HEK293 (cell line): ENCODE measurements at regions of chr7 and their contacts with region 1.

Region 1: DNA sequence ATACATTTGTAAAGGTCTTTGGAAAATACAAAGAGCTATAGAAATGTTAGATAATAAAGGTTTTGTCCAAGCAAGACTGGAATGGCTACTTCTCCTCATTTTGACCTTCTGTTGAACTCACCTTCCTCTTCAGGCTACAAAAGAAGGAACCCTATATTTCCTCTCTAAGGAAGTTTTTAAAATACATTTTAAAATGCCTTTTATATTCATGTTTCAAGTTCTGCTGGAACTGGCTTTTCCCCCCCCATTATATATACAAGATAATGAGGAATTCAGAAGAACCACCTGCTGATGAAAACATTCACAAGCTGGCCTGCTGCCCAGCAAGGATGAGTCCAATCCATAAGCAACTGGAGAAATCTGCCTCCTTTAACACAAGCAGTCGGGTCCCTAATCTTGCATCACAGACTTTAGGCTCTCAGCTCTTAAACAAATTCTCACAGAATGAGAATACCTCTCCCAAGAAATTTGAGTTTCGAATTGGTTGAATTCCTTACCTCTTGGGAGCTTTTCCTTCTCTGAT is 44.6 kb downstream of the MTERF1 start:
- H3K4me3 ChIP-seq: no peak overlapping the region
- H3K27ac ChIP-seq: no peak overlapping the region
- H3K4me1 ChIP-seq: peaks cover 6% of the 10 kb centered on the region; the same call in 1 of the 2 replicates
- CTCF ChIP-seq: no peak

Region 2: DNA sequence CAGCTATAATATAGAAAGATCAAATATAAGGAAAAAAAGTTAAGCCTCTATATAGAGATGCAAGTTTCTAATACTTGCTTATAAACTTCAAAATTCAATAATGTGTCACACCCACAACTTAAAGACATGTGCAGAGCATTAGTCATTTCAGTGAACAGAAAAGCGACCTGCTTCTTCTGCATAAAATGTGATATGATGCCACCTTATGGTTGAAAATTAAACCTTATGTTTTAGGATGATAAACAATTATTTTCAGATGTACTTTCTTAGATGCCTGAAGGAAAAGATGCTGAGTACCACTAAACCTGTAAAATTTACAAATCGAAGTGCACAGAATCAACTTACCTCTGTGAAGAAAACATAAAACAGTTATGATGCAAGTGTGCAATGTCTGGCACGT is 51.4 kb before region 1 on chr7:
- CTCF ChIA-PET with region 1: no interaction called
- POLR2A ChIA-PET with region 1: no interaction called
- H3K4me3 ChIP-seq: no peak overlapping the region
- H3K27ac ChIP-seq: no peak overlapping the region
- H3K4me1 ChIP-seq: no peaks in the 10 kb centered on the region
- CTCF ChIP-seq: no peak

Region 3: DNA sequence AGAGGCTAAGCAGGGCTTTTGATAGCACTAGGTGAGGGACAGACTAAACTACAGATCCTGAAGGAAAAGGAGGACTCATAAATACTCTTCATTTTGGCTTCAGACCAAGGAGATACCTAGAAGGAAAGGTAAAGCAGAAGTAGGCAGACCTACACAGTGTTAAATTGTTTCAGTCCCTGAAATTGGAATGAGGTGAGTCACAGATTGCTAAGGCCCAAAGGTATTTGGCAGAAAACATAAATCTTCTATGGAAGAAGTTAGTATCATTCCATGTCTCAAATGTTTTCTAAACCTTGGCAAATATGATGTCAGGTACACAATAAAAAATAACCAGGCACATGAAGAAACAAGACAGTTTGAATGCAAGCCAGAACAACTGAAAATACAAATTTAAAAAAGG is 14.5 kb after region 1 on chr7:
- CTCF ChIA-PET with region 1: interaction called, 14 read pairs
- POLR2A ChIA-PET with region 1: no interaction called
- H3K4me3 ChIP-seq: no peak overlapping the region
- H3K27ac ChIP-seq: no peak overlapping the region
- H3K4me1 ChIP-seq: no peaks in the 10 kb centered on the region
- CTCF ChIP-seq: no peak